A549 (cell line): ENCODE measurements at regions of chr11 and their contacts with region 1.

Region 1: DNA sequence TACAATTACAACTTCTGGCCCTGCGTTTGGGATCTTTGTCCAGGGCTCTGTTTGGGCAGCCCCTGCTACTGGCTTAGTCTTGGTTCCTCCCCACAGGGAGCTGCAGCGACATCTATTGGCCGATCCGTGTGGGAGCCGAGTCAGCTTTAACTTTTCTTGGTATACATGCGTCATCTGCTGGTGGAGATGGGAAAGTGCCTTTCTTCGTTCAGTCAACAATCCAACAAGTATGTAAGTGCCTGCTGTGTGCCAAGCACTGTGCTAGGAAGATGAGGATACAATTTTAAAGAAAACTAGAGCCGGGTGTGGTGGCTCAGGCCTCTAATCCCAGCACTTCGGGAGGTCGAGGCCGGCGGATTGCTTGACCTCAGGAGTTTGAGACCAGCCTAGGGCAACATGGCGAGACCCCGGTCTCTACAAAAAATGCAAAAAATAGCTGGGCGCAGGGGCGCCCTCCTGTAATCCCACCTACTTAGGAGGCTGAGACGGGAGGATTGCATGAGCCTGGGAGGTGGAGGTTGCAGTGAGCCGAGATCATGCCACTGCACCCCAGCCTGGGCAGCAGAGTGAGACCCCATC is 8.2 kb downstream of the TPBGL start:
- DNase-seq: peak; percentile 87 to 90
- ATAC-seq: peak; percentile 79 to 92
- H3K4me3 ChIP-seq: no peak overlapping the region
- H3K27ac ChIP-seq: no peak overlapping the region
- H3K4me1 ChIP-seq: no peaks in the 10 kb centered on the region
- CTCF ChIP-seq: peak; percentile 100
- EP300 ChIP-seq: no peak
- POLR2A ChIP-seq: no peak
- RAD21 ChIP-seq: peak; percentile 98 to 99

Region 2: DNA sequence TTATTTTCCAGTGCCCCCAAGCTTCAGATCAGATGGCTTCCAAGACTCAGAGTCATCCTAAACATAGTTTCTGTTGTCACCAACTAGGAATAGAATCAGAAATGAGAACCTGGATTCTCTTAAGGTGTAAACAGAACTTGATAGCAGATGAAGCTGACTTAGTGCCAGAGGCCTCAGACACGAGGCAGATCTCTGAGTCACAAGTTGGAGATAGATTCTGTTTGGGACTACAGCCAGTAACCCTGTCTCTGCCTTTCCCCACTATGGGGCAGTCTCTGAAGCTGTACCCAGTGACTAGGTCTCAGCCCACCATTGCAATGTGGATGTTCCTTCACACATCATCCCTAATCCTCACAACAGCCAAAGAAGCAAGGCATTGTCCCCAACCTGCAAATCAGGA is 234.7 kb before region 1 on chr11:
- CTCF ChIA-PET with region 1: interaction called, 355 read pairs
- POLR2A ChIA-PET with region 1: no interaction called
- DNase-seq: peak in 1 of 2 experiments; percentile 18
- ATAC-seq: peak; percentile 41 to 63; a peak in 2 of 6 replicates
- H3K4me3 ChIP-seq: no peak overlapping the region
- H3K27ac ChIP-seq: no peak overlapping the region
- H3K4me1 ChIP-seq: peaks cover 3% of the 10 kb centered on the region; the same call in 1 of the 3 replicates
- CTCF ChIP-seq: no peak
- EP300 ChIP-seq: no peak
- POLR2A ChIP-seq: no peak
- RAD21 ChIP-seq: no peak

Region 3: GRCh38 chr11:75174781-75175370 is 73.9 kb before region 1 on chr11:
- CTCF ChIA-PET with region 1: interaction called, 10 read pairs
- POLR2A ChIA-PET with region 1: no interaction called
- DNase-seq: no peak
- ATAC-seq: peak in 1 of 2 experiments; percentile 53; a peak in 1 of 6 replicates
- H3K4me3 ChIP-seq: no peak overlapping the region
- H3K27ac ChIP-seq: no peak overlapping the region
- H3K4me1 ChIP-seq: no peaks in the 10 kb centered on the region
- CTCF ChIP-seq: no peak
- EP300 ChIP-seq: no peak
- POLR2A ChIP-seq: no peak
- RAD21 ChIP-seq: no peak

Region 4: GRCh38 chr11:75223954-75224643 is 24.7 kb before region 1 on chr11:
- CTCF ChIA-PET with region 1: interaction called, 30 read pairs
- POLR2A ChIA-PET with region 1: no interaction called
- DNase-seq: peak; percentile 21 to 29
- ATAC-seq: peak; percentile 92 to 95
- H3K4me3 ChIP-seq: no peak overlapping the region
- H3K27ac ChIP-seq: no peak overlapping the region
- H3K4me1 ChIP-seq: no peaks in the 10 kb centered on the region
- CTCF ChIP-seq: no peak
- EP300 ChIP-seq: no peak
- POLR2A ChIP-seq: no peak
- RAD21 ChIP-seq: no peak

Region 5: DNA sequence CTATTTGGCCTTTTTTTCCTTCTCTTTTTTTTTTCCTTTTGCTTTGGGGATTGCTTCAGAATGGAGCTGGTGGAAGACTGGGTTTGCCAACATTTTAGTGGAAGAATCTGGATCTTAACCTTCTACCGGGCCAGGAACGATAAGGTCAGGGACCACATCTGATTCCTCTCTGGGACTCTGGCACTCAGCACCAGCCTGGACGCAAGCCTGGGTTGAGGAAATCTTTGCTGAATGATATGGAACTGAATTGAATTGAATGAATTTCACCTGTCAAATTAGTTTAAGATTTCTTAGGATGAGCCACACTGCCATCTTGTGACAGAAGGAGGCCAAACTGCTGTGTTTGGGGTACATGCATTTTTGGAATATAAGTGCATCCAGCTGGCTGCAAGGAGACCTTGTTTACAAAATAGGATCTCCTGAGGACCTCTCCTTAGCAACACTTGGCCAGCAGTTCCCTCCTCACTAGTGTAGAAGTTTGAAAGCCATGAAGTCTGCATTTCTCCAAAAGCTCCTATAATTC is 22.2 kb after region 1 on chr11:
- CTCF ChIA-PET with region 1: interaction called, 77 read pairs
- POLR2A ChIA-PET with region 1: no interaction called
- DNase-seq: peak; percentile 37 to 47
- ATAC-seq: peak; percentile 49 to 63; a peak in 3 of 6 replicates
- H3K4me3 ChIP-seq: no peak overlapping the region
- H3K27ac ChIP-seq: no peak overlapping the region
- H3K4me1 ChIP-seq: no peaks in the 10 kb centered on the region
- CTCF ChIP-seq: peak; percentile 56
- EP300 ChIP-seq: no peak
- POLR2A ChIP-seq: no peak
- RAD21 ChIP-seq: peak; percentile 53 to 56; a peak in 4 of 5 replicates